ENCODE measurements at regions of chr1 and their contacts with region 1.

Region 1: DNA sequence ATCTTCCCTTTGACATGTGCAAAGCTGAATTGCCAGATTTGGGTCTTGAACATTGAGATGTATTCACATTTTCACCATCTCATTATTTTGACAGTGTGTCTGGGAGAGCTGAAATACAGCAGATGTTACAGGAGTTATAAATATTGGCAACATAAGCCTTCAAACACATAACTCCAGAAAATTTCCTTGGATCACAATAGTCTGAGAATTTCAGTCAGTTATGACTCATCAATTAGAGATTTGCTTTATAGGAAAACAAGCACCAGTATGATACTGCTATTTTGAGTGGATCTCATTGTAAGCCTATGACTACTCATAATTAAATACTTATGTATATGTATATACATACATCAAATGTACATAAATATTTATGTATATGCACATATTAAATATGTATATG is 1171.8 kb downstream of the AMY1C start:
- DNase-seq: no peak
- ATAC-seq: no peak
- H3K4me3 ChIP-seq: no peak overlapping the region
- H3K27ac ChIP-seq: no peak overlapping the region
- H3K4me1 ChIP-seq: no peaks in the 10 kb centered on the region
- H3K27me3 ChIP-seq: no peaks in the 10 kb centered on the region
- CTCF ChIP-seq: no peak
- POLR2A ChIP-seq: no peak

Region 2: GRCh38 chr1:104807531-104807930 is 114.0 kb before region 1 on chr1:
- in situ Hi-C with region 1: loop called in 1 of 4 experiments (anchors 25 kb)
- intact Hi-C with region 1: no loop called
- DNase-seq: no peak
- ATAC-seq: no peak
- H3K4me3 ChIP-seq: no peak overlapping the region
- H3K27ac ChIP-seq: no peak overlapping the region
- H3K4me1 ChIP-seq: no peaks in the 10 kb centered on the region
- H3K27me3 ChIP-seq: no peaks in the 10 kb centered on the region
- CTCF ChIP-seq: no peak
- POLR2A ChIP-seq: no peak

Region 3: GRCh38 chr1:105100102-105100501 is 178.6 kb after region 1 on chr1:
- in situ Hi-C with region 1: no loop called
- intact Hi-C with region 1: no loop called
- DNase-seq: no peak
- ATAC-seq: no peak
- H3K4me3 ChIP-seq: no peak overlapping the region
- H3K27ac ChIP-seq: no peak overlapping the region
- H3K4me1 ChIP-seq: no peaks in the 10 kb centered on the region
- H3K27me3 ChIP-seq: no peaks in the 10 kb centered on the region
- CTCF ChIP-seq: no peak
- POLR2A ChIP-seq: no peak